CD4-positive, alpha-beta T cell (primary cell): ENCODE measurements at regions of chr10 and their contacts with region 1.

Region 1: GRCh38 chr10:124719213-124719851 is 24.8 kb downstream of the FAM53B start:
- DNase-seq: peak; percentile 53 to 90 (median 66)
- ATAC-seq: peak; percentile 54
- H3K4me3 ChIP-seq: peak overlapping the region; percentile 29
- H3K4me3 Mint-ChIP-seq: peak overlapping the region; percentile 36
- H3K27ac ChIP-seq: peak overlapping the region; percentile 93 to 95
- H3K27ac Mint-ChIP-seq: peak overlapping the region; percentile 86
- H3K4me1 ChIP-seq: peaks cover 98% of the 10 kb centered on the region
- H3K4me1 Mint-ChIP-seq: peaks cover 92% of the 10 kb centered on the region
- H3K27me3 ChIP-seq: no peaks in the 10 kb centered on the region
- H3K27me3 Mint-ChIP-seq: no peaks in the 10 kb centered on the region
- CTCF ChIP-seq: peak; percentile 68

Region 2: GRCh38 chr10:124640538-124641231 is 78.6 kb before region 1 on chr10:
- CTCF ChIA-PET with region 1: interaction called, 12 read pairs
- POLR2A ChIA-PET with region 1: interaction called, 72 read pairs
- intact Hi-C with region 1: loop called (anchors 2 to 5 kb)
- DNase-seq: peak in 4 of 14 experiments; percentile 39 to 58 (median 48)
- ATAC-seq: peak; percentile 25
- H3K4me3 ChIP-seq: peak overlapping the region; percentile 15
- H3K4me3 Mint-ChIP-seq: peak overlapping the region; percentile 46
- H3K27ac ChIP-seq: peak overlapping the region; percentile 43 to 49
- H3K27ac Mint-ChIP-seq: peak overlapping the region; percentile 95
- H3K4me1 ChIP-seq: peaks cover 100% of the 10 kb centered on the region
- H3K4me1 Mint-ChIP-seq: peaks cover 86% of the 10 kb centered on the region
- H3K27me3 ChIP-seq: no peaks in the 10 kb centered on the region
- H3K27me3 Mint-ChIP-seq: no peaks in the 10 kb centered on the region
- CTCF ChIP-seq: no peak

Region 3: DNA sequence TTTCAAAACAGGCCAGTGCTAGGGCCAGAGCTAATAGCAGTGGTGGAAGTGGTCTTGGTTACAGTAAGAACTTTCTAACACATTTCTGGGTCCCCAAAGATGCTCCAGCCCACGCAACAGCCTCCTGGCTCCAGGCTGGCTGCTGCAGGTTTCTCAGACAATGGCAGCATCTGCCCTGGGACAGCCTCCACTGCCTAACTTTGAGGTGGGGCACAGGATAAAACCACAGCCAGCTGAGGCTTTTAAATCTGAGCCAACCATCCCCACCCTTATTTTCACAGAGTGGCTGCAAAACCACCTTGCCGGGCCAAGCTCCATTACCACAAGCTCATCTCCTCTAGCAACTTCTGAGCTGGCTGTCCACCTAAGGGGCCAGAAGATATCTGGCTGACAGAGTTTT is 60.0 kb before region 1 on chr10:
- CTCF ChIA-PET with region 1: interaction called, 4 read pairs
- POLR2A ChIA-PET with region 1: interaction called, 11 read pairs
- intact Hi-C with region 1: no loop called
- DNase-seq: peak in 3 of 14 experiments; percentile 32 to 47 (median 46)
- ATAC-seq: no peak
- H3K4me3 ChIP-seq: peak overlapping the region; percentile 9
- H3K4me3 Mint-ChIP-seq: peak overlapping the region; percentile 30
- H3K27ac ChIP-seq: peak overlapping the region; percentile 57 to 83
- H3K27ac Mint-ChIP-seq: peak overlapping the region; percentile 81
- H3K4me1 ChIP-seq: peaks cover 93% of the 10 kb centered on the region
- H3K4me1 Mint-ChIP-seq: peaks cover 77% of the 10 kb centered on the region
- H3K27me3 ChIP-seq: no peaks in the 10 kb centered on the region
- H3K27me3 Mint-ChIP-seq: no peaks in the 10 kb centered on the region
- CTCF ChIP-seq: no peak

Region 4: GRCh38 chr10:124677749-124678556 is 41.4 kb before region 1 on chr10:
- CTCF ChIA-PET with region 1: interaction called, 8 read pairs
- POLR2A ChIA-PET with region 1: interaction called, 24 read pairs
- intact Hi-C with region 1: loop called (anchors 2 to 5 kb)
- DNase-seq: peak in 1 of 14 experiments; percentile 28
- ATAC-seq: peak; percentile 42
- H3K4me3 ChIP-seq: no peak overlapping the region
- H3K4me3 Mint-ChIP-seq: peak overlapping the region; percentile 63
- H3K27ac ChIP-seq: peak overlapping the region; percentile 29 to 39
- H3K27ac Mint-ChIP-seq: peak overlapping the region; percentile 87
- H3K4me1 ChIP-seq: peaks cover 94% of the 10 kb centered on the region
- H3K4me1 Mint-ChIP-seq: peaks cover 90% of the 10 kb centered on the region
- H3K27me3 ChIP-seq: no peaks in the 10 kb centered on the region
- H3K27me3 Mint-ChIP-seq: no peaks in the 10 kb centered on the region
- CTCF ChIP-seq: no peak

Region 5: GRCh38 chr10:124697830-124698544 is 21.3 kb before region 1 on chr10:
- CTCF ChIA-PET with region 1: interaction called, 58 read pairs
- POLR2A ChIA-PET with region 1: interaction called, 133 read pairs
- intact Hi-C with region 1: loop called in 1 of 2 experiments (anchors 2 kb)
- DNase-seq: peak in 11 of 14 experiments; percentile 32 to 81 (median 43)
- ATAC-seq: peak; percentile 59
- H3K4me3 ChIP-seq: no peak overlapping the region
- H3K4me3 Mint-ChIP-seq: peak overlapping the region; percentile 42
- H3K27ac ChIP-seq: peak overlapping the region; percentile 74 to 85
- H3K27ac Mint-ChIP-seq: peak overlapping the region; percentile 91
- H3K4me1 ChIP-seq: peaks cover 97% of the 10 kb centered on the region
- H3K4me1 Mint-ChIP-seq: peaks cover 95% of the 10 kb centered on the region
- H3K27me3 ChIP-seq: no peaks in the 10 kb centered on the region
- H3K27me3 Mint-ChIP-seq: no peaks in the 10 kb centered on the region
- CTCF ChIP-seq: no peak

Region 6: DNA sequence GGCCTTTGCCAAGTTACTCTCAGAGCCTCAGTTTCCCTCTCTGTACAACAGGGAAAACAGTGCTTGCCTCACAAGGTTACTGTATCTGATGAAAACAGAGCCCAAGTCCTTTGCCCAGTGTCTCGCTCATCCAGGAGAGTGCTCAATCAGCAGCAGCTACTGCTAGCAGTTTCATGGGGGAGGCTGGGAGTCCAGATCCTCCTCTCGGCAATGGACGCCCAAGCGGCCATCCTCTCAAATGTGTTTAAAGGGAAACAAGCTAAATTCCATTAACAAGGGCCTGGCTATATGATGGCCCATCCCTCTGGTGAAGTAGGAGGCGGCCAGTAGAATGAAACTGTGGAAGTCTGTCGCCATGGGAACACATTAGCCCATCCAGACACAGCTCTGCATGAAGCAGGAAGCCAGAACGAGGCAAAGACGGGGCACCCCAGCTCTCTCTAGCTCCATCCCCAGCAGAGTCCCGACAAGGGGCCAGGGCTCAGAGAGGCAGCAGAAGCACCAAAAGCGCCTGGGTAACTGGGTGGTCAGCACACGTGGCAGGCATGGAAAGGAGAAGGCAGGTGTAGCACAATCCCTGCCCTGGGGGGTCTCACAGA is 10.3 kb before region 1 on chr10:
- CTCF ChIA-PET with region 1: interaction called, 58 read pairs
- POLR2A ChIA-PET with region 1: interaction called, 133 read pairs
- intact Hi-C with region 1: no loop called
- DNase-seq: no peak
- ATAC-seq: peak; percentile 37
- H3K4me3 ChIP-seq: no peak overlapping the region
- H3K4me3 Mint-ChIP-seq: no peak overlapping the region
- H3K27ac ChIP-seq: peak overlapping the region in 1 of 2 donors; percentile 38
- H3K27ac Mint-ChIP-seq: peak overlapping the region; percentile 91
- H3K4me1 ChIP-seq: peaks cover 99% of the 10 kb centered on the region
- H3K4me1 Mint-ChIP-seq: peaks cover 90% of the 10 kb centered on the region
- H3K27me3 ChIP-seq: no peaks in the 10 kb centered on the region
- H3K27me3 Mint-ChIP-seq: no peaks in the 10 kb centered on the region
- CTCF ChIP-seq: no peak